MCF 10A (cell line): ENCODE measurements at regions of chr10 and their contacts with region 1.

Region 1: DNA sequence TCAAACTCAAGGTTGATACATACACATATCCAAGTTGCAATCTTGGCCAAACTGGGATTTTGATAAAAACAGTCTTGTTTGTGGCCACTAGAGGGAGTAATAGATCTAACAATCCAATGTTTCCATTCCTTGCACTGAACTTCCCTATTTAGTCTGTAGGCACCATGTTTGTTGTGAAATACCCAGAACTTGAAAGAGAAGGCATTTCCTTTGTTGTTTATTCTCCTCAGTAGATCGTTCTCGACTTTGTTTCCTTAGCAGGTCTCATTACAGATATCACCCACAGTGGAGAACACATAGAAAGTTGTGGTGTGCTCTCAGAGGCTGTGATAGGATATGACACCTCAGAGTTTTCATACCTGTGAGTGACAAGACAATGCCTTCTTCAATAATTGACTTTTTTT is 70.3 kb upstream of the MXI1 start:
- DNase-seq: peak; percentile 74
- H3K4me3 Mint-ChIP-seq: no peak overlapping the region
- H3K27ac Mint-ChIP-seq: peak overlapping the region; percentile 58
- H3K4me1 Mint-ChIP-seq: peaks cover 14% of the 10 kb centered on the region
- H3K27me3 Mint-ChIP-seq: no peaks in the 10 kb centered on the region
- CTCF ChIP-seq: peak; percentile 64

Region 2: DNA sequence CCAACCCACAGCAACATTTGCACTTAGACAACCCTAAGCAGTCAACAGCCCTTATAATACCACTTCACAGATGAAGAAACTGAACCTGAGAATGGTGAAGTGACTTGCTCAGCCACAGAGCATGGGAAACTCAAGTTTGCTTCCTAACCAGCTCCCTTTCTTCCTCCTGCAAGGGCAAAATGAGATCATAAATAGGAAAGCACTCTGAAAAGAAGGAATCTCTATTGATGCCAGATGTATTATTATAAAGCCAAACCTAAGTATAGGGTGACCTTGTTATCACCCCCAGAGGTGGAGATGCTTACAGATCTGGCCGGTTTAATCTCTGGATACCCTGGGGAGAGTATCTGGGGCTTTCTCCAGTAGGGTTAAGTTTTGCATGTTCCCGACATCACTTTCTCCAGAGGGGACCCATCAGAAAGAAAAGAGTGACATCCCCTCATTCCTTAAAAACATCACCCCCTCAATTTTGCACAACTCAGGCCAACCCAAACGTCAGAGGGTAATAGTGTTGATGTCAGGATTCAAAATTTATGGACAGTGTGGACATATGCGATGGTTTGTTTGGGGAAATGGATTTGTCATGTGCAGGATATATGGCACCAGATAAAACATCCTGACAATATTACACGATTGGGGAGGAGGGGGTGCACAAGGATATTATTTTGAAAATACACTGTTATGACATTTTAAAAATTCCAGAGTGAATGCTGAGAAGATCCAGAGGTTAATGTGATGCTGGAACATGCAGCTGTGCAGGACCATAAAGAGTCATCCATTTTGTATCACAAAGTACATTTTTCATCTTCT is 189.8 kb before region 1 on chr10:
- CTCF ChIA-PET with region 1: no interaction called
- POLR2A ChIA-PET with region 1: no interaction called
- intact Hi-C with region 1: no loop called
- DNase-seq: no peak
- H3K4me3 Mint-ChIP-seq: no peak overlapping the region
- H3K27ac Mint-ChIP-seq: no peak overlapping the region
- H3K4me1 Mint-ChIP-seq: no peaks in the 10 kb centered on the region
- H3K27me3 Mint-ChIP-seq: no peaks in the 10 kb centered on the region
- CTCF ChIP-seq: no peak

Region 3: GRCh38 chr10:110218632-110219031 is 81.5 kb after region 1 on chr10:
- CTCF ChIA-PET with region 1: interaction called, 120 read pairs
- POLR2A ChIA-PET with region 1: interaction called, 59 read pairs
- intact Hi-C with region 1: loop called (anchors 1 kb)
- DNase-seq: no peak
- H3K4me3 Mint-ChIP-seq: no peak overlapping the region
- H3K27ac Mint-ChIP-seq: no peak overlapping the region
- H3K4me1 Mint-ChIP-seq: peaks cover 23% of the 10 kb centered on the region
- H3K27me3 Mint-ChIP-seq: no peaks in the 10 kb centered on the region
- CTCF ChIP-seq: no peak

Region 4: GRCh38 chr10:110273474-110273873 is 136.3 kb after region 1 on chr10:
- CTCF ChIA-PET with region 1: interaction called, 62 read pairs
- POLR2A ChIA-PET with region 1: interaction called, 12 read pairs
- intact Hi-C with region 1: no loop called
- DNase-seq: peak; percentile 91
- H3K4me3 Mint-ChIP-seq: no peak overlapping the region
- H3K27ac Mint-ChIP-seq: peak overlapping the region; percentile 2
- H3K4me1 Mint-ChIP-seq: peaks cover 16% of the 10 kb centered on the region
- H3K27me3 Mint-ChIP-seq: no peaks in the 10 kb centered on the region
- CTCF ChIP-seq: no peak

Region 5: GRCh38 chr10:110285501-110285900 is 148.4 kb after region 1 on chr10:
- CTCF ChIA-PET with region 1: interaction called, 62 read pairs
- POLR2A ChIA-PET with region 1: interaction called, 3 read pairs
- intact Hi-C with region 1: no loop called
- DNase-seq: no peak
- H3K4me3 Mint-ChIP-seq: no peak overlapping the region
- H3K27ac Mint-ChIP-seq: no peak overlapping the region
- H3K4me1 Mint-ChIP-seq: no peaks in the 10 kb centered on the region
- H3K27me3 Mint-ChIP-seq: no peaks in the 10 kb centered on the region
- CTCF ChIP-seq: no peak

Region 6: GRCh38 chr10:110344622-110345021 is 207.5 kb after region 1 on chr10:
- CTCF ChIA-PET with region 1: no interaction called
- POLR2A ChIA-PET with region 1: no interaction called
- intact Hi-C with region 1: no loop called
- DNase-seq: no peak
- H3K4me3 Mint-ChIP-seq: no peak overlapping the region
- H3K27ac Mint-ChIP-seq: no peak overlapping the region
- H3K4me1 Mint-ChIP-seq: peaks cover 11% of the 10 kb centered on the region
- H3K27me3 Mint-ChIP-seq: no peaks in the 10 kb centered on the region
- CTCF ChIP-seq: no peak